T-cell (primary cell): ENCODE measurements at regions of chr1 and their contacts with region 1.

Region 1: GRCh38 chr1:233304489-233305102 is 9.1 kb upstream of the PCNX2 start:
- DNase-seq: peak in 1 of 35 experiments; percentile 66
- ATAC-seq: peak in 3 of 4 experiments; percentile 37 to 57 (median 40)
- H3K4me3 ChIP-seq: no peak overlapping the region
- H3K4me3 Mint-ChIP-seq: no peak overlapping the region
- H3K27ac ChIP-seq: no peak overlapping the region
- H3K27ac Mint-ChIP-seq: no peak overlapping the region
- H3K4me1 ChIP-seq: no peaks in the 10 kb centered on the region
- H3K4me1 Mint-ChIP-seq: no peaks in the 10 kb centered on the region
- H3K27me3 ChIP-seq: peaks cover 2 to 8% of the 10 kb centered on the region in 2 experiments
- H3K27me3 Mint-ChIP-seq: peaks cover 7 to 16% of the 10 kb centered on the region in 2 donors

Region 2: DNA sequence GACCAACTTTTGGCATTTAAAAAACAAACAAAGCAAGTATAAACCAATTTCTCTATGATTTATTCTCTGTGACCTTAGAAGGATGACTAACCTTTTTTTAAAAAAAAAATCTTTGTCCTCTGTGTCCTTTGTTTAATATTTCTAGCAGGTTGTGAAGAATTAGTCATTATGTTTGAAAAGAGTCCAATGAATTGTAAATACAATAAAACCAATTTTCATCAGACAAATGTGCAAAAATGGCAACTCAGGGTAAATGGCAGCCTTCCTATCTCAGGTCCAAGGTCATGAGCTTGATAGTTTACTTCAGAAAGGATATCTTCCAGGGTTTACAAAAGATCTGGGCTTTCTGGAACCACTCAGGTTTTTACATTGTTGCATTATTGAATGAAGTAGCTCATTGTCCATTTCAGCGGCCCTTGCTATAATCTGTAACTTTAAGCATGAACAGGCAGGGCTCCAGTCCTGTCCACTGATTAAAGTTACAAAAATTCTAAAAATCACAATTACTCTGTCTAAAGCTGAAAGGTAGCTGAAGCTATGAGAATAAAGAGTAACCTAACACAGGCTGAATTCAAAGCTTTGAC is 11.2 kb after region 1 on chr1:
- CTCF ChIA-PET with region 1: interaction called, 9 to 11 read pairs
- POLR2A ChIA-PET with region 1: no interaction called
- DNase-seq: no peak
- ATAC-seq: no peak
- H3K4me3 ChIP-seq: no peak overlapping the region
- H3K4me3 Mint-ChIP-seq: no peak overlapping the region
- H3K27ac ChIP-seq: no peak overlapping the region
- H3K27ac Mint-ChIP-seq: no peak overlapping the region
- H3K4me1 ChIP-seq: no peaks in the 10 kb centered on the region
- H3K4me1 Mint-ChIP-seq: no peaks in the 10 kb centered on the region
- H3K27me3 ChIP-seq: peaks cover 0 to 2% of the 10 kb centered on the region in 2 experiments
- H3K27me3 Mint-ChIP-seq: peaks cover 8 to 19% of the 10 kb centered on the region in 2 donors

Region 3: DNA sequence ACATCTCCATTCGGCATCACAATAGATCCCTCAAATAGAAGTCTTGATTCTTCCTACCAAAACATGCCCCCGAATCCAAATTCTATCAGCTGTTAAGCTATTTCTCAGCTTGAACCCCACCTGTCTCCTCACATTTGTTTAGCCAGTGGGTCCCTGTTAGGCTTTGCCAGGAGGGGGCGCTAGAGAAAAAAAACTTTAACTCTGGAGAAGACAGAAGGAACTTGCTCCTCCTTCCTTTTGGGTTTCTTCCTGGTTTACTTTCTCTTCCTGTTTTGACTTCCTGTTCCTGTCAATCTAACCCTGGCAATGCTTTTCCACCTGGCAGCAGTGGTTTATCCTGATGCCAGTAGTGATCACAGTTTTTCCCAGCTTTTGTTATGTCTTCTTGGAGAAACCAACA is 213.8 kb after region 1 on chr1:
- CTCF ChIA-PET with region 1: no interaction called
- POLR2A ChIA-PET with region 1: no interaction called
- DNase-seq: no peak
- ATAC-seq: no peak
- H3K4me3 ChIP-seq: no peak overlapping the region
- H3K4me3 Mint-ChIP-seq: no peak overlapping the region
- H3K27ac ChIP-seq: no peak overlapping the region
- H3K27ac Mint-ChIP-seq: no peak overlapping the region
- H3K4me1 ChIP-seq: no peaks in the 10 kb centered on the region
- H3K4me1 Mint-ChIP-seq: no peaks in the 10 kb centered on the region
- H3K27me3 ChIP-seq: peaks cover 0 to 21% of the 10 kb centered on the region in 2 experiments
- H3K27me3 Mint-ChIP-seq: peaks cover 2 to 5% of the 10 kb centered on the region in 2 donors